MCF 10A (cell line): ENCODE measurements at regions of chr3 and their contacts with region 1.

Region 1: DNA sequence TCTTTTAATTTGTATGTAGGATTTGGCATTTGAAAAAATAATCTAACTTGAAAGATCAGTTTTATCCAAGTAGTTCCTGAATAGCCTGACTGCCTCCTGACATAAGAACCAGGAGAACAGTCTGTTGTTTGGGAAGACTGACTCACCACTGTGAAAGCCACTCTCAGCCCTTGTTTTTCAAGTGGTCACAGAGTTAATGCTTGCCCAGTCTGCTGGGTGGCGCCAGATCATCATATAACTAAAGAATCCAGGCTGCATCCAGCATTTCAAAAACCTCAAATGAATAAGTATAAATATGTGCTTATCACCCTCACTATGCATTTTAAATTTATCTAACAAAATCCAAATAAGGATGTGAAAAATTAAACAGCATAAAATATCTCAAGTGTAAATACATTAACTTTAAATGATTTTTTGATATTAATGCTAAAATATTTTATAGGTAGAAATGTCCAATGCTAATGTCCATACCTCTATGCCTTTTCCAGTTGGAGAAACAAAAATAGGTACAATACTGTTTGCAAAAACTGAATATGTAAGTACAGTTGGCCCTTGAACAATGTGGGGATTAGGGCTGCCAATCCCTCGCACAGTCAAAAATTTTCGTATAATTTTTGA is 26.9 kb upstream of the ZBBX start:
- DNase-seq: peak; percentile 85
- H3K4me3 Mint-ChIP-seq: no peak overlapping the region
- H3K27ac Mint-ChIP-seq: no peak overlapping the region
- H3K4me1 Mint-ChIP-seq: no peaks in the 10 kb centered on the region
- H3K27me3 Mint-ChIP-seq: peaks cover 28% of the 10 kb centered on the region
- CTCF ChIP-seq: peak; percentile 59

Region 2: DNA sequence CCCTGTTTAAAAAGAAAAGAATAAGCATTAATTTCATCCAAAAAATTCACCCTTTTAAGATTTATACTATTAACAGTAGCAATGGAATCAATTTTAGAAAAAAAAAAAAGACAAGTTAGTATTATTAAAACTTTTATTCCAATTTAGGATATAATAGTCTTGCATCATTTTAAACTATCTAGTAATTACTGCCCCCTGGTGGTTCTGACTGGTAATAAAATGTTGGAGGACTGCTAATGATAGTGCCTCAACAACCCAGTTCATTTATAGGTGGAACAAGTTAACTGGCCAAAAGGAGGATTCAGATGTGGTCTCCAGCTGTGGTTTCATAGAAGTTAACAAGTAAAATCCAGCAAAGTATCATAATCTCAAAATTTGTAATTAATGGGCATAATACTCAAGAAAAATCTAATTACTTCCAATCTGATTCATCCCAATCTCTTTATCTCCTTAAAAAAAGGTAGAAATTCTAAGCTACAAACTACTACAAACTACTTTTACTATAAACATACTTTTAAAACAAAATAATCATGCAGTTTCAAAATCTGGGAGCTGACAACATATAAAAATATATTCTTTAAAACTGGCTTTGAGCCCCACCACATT is 277.5 kb after region 1 on chr3:
- CTCF ChIA-PET with region 1: interaction called, 43 read pairs
- POLR2A ChIA-PET with region 1: interaction called, 3 read pairs
- intact Hi-C with region 1: loop called (anchors 1 kb)
- DNase-seq: peak; percentile 78
- H3K4me3 Mint-ChIP-seq: no peak overlapping the region
- H3K27ac Mint-ChIP-seq: no peak overlapping the region
- H3K4me1 Mint-ChIP-seq: no peaks in the 10 kb centered on the region
- H3K27me3 Mint-ChIP-seq: no peaks in the 10 kb centered on the region
- CTCF ChIP-seq: peak; percentile 51

Region 3: GRCh38 chr3:167740961-167741587 is 334.1 kb after region 1 on chr3:
- CTCF ChIA-PET with region 1: interaction called, 4 read pairs
- POLR2A ChIA-PET with region 1: no interaction called
- intact Hi-C with region 1: loop called (anchors 1 kb)
- DNase-seq: peak; percentile 45
- H3K4me3 Mint-ChIP-seq: no peak overlapping the region
- H3K27ac Mint-ChIP-seq: no peak overlapping the region
- H3K4me1 Mint-ChIP-seq: peaks cover 8% of the 10 kb centered on the region
- H3K27me3 Mint-ChIP-seq: no peaks in the 10 kb centered on the region
- CTCF ChIP-seq: no peak

Region 4: DNA sequence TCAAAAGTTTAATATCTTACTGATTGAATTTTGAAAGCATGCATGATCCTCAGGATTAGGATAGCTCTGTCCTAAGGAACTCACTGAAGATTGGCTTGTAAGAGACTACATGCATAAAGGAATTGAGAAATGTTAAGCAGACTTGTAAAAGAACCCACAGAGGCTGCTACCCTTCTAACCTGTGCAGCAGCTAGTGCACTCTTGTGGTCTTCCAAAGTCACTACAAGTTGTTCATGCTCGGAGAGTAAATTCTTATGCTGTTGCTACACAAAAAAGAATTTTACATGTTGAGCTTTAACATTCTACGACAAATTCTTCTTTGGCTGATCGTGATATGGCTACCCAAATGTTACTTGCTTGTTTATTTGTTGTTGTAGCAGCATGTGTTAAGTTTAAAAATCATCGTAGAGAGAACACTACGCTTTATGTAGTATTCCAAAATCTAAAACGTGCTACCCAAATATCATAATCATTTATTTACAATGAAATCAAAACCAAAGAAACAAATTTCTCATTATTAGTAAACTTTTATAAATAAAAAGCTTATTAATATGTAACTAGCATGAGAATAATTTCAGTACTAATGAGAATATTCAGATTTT is 633.7 kb after region 1 on chr3:
- CTCF ChIA-PET with region 1: interaction called, 9 read pairs
- POLR2A ChIA-PET with region 1: no interaction called
- intact Hi-C with region 1: loop called (anchors 1 kb)
- DNase-seq: peak; percentile 70
- H3K4me3 Mint-ChIP-seq: no peak overlapping the region
- H3K27ac Mint-ChIP-seq: no peak overlapping the region
- H3K4me1 Mint-ChIP-seq: no peaks in the 10 kb centered on the region
- H3K27me3 Mint-ChIP-seq: no peaks in the 10 kb centered on the region
- CTCF ChIP-seq: peak; percentile 45